ENCODE measurements at regions of chr6 and their contacts with region 1.

Region 1: GRCh38 chr6:42978839-42979522 is at the start of gene PEX6:
- DNase-seq: peak; percentile 94
- H3K4me3 Mint-ChIP-seq: peak within 1 kb of the TSS; percentile 91
- H3K27ac Mint-ChIP-seq: peak within 1 kb of the TSS; percentile 96
- H3K4me1 Mint-ChIP-seq: peaks cover 38% of the 10 kb centered on the region
- H3K27me3 Mint-ChIP-seq: no peaks in the 10 kb centered on the region
- total RNA-seq, gene PEX6: 20.9 TPM in 2 replicates

Region 2: GRCh38 chr6:42963855-42964605 is 15.0 kb before region 1 on chr6:
- intact Hi-C with region 1: loop called (anchors 1 kb)
- DNase-seq: no peak
- H3K4me3 Mint-ChIP-seq: no peak overlapping the region
- H3K27ac Mint-ChIP-seq: no peak overlapping the region
- H3K4me1 Mint-ChIP-seq: peaks cover 18% of the 10 kb centered on the region
- H3K27me3 Mint-ChIP-seq: peaks cover 18% of the 10 kb centered on the region

Region 3: GRCh38 chr6:43427406-43428111 is 448.6 kb after region 1 on chr6 and contains the start of gene ABCC10:
- intact Hi-C with region 1: loop called (anchors 5 kb)
- DNase-seq: peak; percentile 93
- H3K4me3 Mint-ChIP-seq: peak within 1 kb of the TSS; percentile 96
- H3K27ac Mint-ChIP-seq: peak within 1 kb of the TSS; percentile 96
- H3K4me1 Mint-ChIP-seq: peaks cover 17% of the 10 kb centered on the region
- H3K27me3 Mint-ChIP-seq: no peaks in the 10 kb centered on the region
- total RNA-seq, gene ABCC10: 40.5 and 43.6 TPM in 2 replicates